Tibial artery (tissue), 4 donors: ENCODE measurements at regions of chr22 and their contacts with region 1.

Region 1: DNA sequence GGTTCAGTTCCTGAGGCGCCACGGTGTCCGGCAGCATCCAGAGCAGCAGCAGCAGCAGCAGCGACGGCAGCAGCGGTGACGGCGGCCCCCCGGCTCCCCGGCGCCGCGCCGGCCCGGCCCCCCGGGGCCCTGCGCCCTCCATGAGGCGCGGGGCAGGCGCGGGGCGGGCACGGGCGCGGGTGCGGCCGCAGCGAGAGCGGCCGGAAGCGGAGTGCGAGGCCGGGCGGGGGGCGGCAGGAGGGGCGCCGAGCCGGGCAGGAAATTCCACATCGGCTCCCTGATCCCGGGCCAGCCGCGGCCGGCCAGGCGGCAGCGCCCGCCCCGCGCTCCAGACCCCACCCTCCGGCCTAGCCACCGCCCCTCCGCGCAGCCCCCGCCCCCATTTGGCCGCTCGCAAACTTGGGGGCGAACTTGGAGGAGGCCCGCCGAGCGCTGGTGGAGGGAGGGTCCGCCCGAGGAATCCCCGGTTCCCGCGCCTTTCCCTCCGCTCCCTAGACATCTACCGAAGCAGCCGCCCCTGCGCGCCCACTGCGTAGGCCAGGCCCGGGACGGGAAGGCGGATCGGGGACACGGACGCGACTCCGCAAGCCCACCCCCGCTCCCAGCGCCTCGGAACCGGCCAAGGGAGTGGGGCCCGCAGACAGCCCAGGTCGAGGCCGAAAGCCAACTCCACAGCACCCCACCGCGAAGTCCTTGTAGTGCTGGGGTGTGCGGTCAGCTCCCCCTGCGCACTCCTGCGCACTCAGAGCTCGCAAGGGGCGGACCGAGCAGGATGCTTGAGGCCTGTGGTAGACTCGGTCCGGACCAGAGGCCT is at the start of gene SCARF2:
- DNase-seq: peak in 1 of 2 donors; percentile 83
- H3K4me3 ChIP-seq: peak within 1 kb of the TSS; percentile 78 to 89
- H3K27ac ChIP-seq: peak within 1 kb of the TSS; percentile 94 to 96
- H3K4me1 ChIP-seq: peaks cover 0 to 46% (median 25%) of the 10 kb centered on the region in 4 donors
- H3K27me3 ChIP-seq: no peaks in the 10 kb centered on the region
- CTCF ChIP-seq: no peak

Region 2: DNA sequence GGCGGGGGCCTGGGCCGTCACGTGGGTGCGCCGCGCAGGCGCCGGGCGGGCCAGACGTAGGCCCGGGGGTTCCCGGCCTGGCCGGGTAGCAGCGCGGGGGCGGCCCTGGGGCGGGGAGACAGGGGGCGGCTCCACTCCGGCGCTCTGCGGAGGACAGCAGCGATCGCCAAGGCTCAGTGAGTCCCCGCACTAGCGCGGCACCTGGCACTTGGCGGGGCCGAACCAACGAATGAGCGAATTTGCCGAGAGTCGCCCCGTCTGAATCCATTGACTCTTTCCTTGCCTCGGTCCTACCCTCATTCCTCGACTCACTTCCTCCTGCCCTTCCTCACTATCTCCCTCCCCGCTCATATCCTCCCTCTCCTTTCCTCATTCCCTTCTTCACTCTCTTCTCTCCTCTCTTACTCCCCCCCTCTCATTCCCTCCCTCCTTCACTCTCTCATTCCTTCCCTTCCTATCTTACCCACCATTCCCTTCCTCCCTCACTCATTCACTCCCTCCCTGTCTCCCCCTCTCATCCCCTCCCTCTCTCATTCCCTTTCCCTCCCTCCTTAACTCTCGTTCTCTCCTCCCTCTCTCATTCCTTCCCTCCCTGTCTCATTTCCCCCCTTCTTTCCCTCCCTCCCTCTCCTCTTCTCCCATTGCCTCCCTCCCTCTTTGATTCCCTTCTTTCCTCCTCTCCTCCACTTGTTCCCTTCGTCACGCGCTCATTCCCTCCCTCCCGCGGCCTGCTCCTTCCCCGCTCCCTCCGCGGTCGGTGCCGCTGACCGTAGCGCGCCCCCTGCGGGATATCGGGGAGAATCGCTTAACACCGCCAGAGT is 58.3 kb after region 1 on chr22:
- intact Hi-C with region 1: loop called (anchors 5 kb)
- DNase-seq: peak; percentile 86 to 96
- H3K4me3 ChIP-seq: peak overlapping the region; percentile 65 to 68
- H3K27ac ChIP-seq: peak overlapping the region; percentile 98
- H3K4me1 ChIP-seq: peaks cover 0 to 23% (median 15%) of the 10 kb centered on the region in 4 donors
- H3K27me3 ChIP-seq: no peaks in the 10 kb centered on the region
- CTCF ChIP-seq: peak; percentile 84 to 85

Region 3: DNA sequence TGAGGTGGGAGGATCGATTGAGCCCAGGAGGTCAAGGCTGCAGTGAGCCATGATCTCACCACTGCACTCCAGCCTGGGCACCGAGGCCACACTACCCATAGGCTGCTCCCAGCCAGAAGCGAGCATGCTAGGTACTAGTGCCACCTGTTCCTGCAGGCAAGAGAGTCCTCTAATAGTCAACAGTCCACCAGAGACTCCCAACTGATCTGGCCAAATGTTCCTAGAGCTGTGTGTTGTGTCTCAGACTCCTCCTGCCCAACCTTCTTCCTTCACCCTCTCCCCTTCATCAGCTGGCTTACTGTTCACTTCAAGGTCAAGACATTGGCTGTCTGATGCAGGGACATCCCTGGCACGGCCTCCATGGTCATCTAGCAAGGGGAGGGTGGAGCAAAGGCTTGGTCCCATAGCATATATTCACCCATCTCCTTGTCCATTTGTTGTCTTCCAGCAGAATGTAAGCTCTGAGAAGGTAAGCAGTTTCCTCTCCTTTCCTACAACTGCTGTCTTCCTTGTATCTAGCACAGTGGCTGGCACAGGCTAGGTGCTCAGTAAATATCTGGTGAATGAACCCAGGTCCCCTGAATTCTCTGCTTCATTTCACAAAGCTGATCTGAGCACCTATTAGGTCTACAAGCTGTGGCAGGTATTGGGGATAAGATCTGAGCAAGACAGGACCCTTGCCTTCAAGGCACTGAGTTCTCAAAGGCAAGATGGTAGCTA is 209.9 kb after region 1 on chr22:
- intact Hi-C with region 1: no loop called
- DNase-seq: no peak
- H3K4me3 ChIP-seq: no peak overlapping the region
- H3K27ac ChIP-seq: no peak overlapping the region
- H3K4me1 ChIP-seq: no peaks in the 10 kb centered on the region
- H3K27me3 ChIP-seq: no peaks in the 10 kb centered on the region
- CTCF ChIP-seq: no peak

Region 4: GRCh38 chr22:20750461-20751184 is 312.8 kb after region 1 on chr22:
- intact Hi-C with region 1: no loop called
- DNase-seq: peak; percentile 71 to 74
- H3K4me3 ChIP-seq: no peak overlapping the region
- H3K27ac ChIP-seq: no peak overlapping the region
- H3K4me1 ChIP-seq: peaks cover 0 to 9% (median 0%) of the 10 kb centered on the region in 4 donors
- H3K27me3 ChIP-seq: no peaks in the 10 kb centered on the region
- CTCF ChIP-seq: no peak